ENCODE measurements at regions of chr20 and their contacts with region 1.

Region 1: GRCh38 chr20:43909720-43910119 is 4.9 kb upstream of the TOX2 start:
- DNase-seq: no peak
- H3K4me3 ChIP-seq: no peak overlapping the region
- H3K27ac ChIP-seq: no peak overlapping the region
- H3K4me1 ChIP-seq: no peaks in the 10 kb centered on the region
- H3K27me3 ChIP-seq: peaks cover 11% of the 10 kb centered on the region
- CTCF ChIP-seq: no peak
- EP300 ChIP-seq: no peak
- POLR2A ChIP-seq: no peak

Region 2: GRCh38 chr20:43492101-43492500 is 417.6 kb before region 1 on chr20:
- in situ Hi-C with region 1: no loop called
- intact Hi-C with region 1: no loop called
- DNase-seq: no peak
- H3K4me3 ChIP-seq: no peak overlapping the region
- H3K27ac ChIP-seq: no peak overlapping the region
- H3K4me1 ChIP-seq: no peaks in the 10 kb centered on the region
- H3K27me3 ChIP-seq: no peaks in the 10 kb centered on the region
- CTCF ChIP-seq: no peak
- EP300 ChIP-seq: no peak
- POLR2A ChIP-seq: no peak

Region 3: GRCh38 chr20:43833511-43834395 is 76.0 kb before region 1 on chr20:
- in situ Hi-C with region 1: no loop called
- intact Hi-C with region 1: no loop called
- DNase-seq: no peak
- H3K4me3 ChIP-seq: no peak overlapping the region
- H3K27ac ChIP-seq: no peak overlapping the region
- H3K4me1 ChIP-seq: no peaks in the 10 kb centered on the region
- H3K27me3 ChIP-seq: no peaks in the 10 kb centered on the region
- CTCF ChIP-seq: no peak
- EP300 ChIP-seq: no peak
- POLR2A ChIP-seq: no peak

Region 4: DNA sequence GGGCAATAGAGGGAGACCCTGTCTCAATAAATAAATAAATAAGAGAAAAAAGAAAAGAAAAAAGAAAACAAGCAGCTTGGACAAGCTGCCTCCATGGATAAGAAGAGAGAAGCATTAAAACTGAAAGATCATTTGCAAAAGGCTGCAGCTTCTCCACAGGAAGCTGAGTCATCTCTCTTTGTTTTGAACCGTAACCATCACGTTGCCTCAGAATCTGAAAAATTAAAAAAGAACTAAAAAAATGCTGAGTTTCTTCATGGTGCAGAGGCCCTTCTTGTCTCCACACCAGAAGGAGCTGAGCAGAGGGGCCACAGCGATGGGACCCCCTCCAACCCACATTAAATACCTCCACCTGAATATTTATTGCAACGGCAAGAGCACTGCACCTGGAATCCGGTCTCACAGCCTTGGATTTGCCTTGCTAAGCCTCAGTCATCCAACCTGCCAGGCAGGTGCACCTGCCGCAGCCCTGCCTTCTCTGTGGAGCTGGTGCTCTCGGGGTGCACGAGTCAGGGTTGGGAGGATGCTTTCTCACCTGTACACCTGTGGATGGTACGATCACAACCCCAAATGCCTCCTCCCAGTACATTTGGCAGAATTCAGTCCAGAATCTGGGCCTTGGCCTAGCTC is 33.1 kb after region 1 on chr20:
- in situ Hi-C with region 1: no loop called
- intact Hi-C with region 1: no loop called
- DNase-seq: no peak
- H3K4me3 ChIP-seq: no peak overlapping the region
- H3K27ac ChIP-seq: peak overlapping the region; percentile 46 to 68 (median 58)
- H3K4me1 ChIP-seq: peaks cover 0 to 43% (median 31%) of the 10 kb centered on the region in 4 donors
- H3K27me3 ChIP-seq: no peaks in the 10 kb centered on the region
- CTCF ChIP-seq: no peak
- EP300 ChIP-seq: no peak
- POLR2A ChIP-seq: no peak

Region 5: GRCh38 chr20:44288252-44288651 is 378.5 kb after region 1 on chr20:
- in situ Hi-C with region 1: no loop called
- intact Hi-C with region 1: loop called (anchors 5 kb)
- DNase-seq: peak; percentile 13
- H3K4me3 ChIP-seq: no peak overlapping the region
- H3K27ac ChIP-seq: no peak overlapping the region
- H3K4me1 ChIP-seq: peaks cover 0 to 11% (median 0%) of the 10 kb centered on the region in 4 donors
- H3K27me3 ChIP-seq: no peaks in the 10 kb centered on the region
- CTCF ChIP-seq: no peak
- EP300 ChIP-seq: no peak
- POLR2A ChIP-seq: no peak